Spleen (tissue), 13 donors: ENCODE measurements at regions of chr1 and their contacts with region 1.

Region 1: GRCh38 chr1:30911046-30911954 is 2.7 kb upstream of the SDC3 start:
- DNase-seq: peak; percentile 87
- H3K4me3 ChIP-seq: no peak overlapping the region
- H3K27ac ChIP-seq: peak overlapping the region in 3 of 8 donors; percentile 73 to 81 (median 77)
- H3K4me1 ChIP-seq: peaks cover 10 to 70% (median 48%) of the 10 kb centered on the region in 6 donors
- H3K27me3 ChIP-seq: peaks cover 0 to 39% (median 14%) of the 10 kb centered on the region in 7 donors
- CTCF ChIP-seq: peak; percentile 56 to 91 (median 76)
- POLR2A ChIP-seq: no peak

Region 2: GRCh38 chr1:30779294-30780071 is 131.8 kb before region 1 on chr1:
- intact Hi-C with region 1: loop called (anchors 5 kb)
- DNase-seq: peak; percentile 97
- H3K4me3 ChIP-seq: peak overlapping the region in 1 of 8 donors; percentile 28
- H3K27ac ChIP-seq: peak overlapping the region in 3 of 8 donors; percentile 55 to 78 (median 69)
- H3K4me1 ChIP-seq: peaks cover 20 to 72% (median 40%) of the 10 kb centered on the region in 6 donors
- H3K27me3 ChIP-seq: no peaks in the 10 kb centered on the region
- CTCF ChIP-seq: peak; percentile 83 to 99 (median 97)
- POLR2A ChIP-seq: no peak

Region 3: DNA sequence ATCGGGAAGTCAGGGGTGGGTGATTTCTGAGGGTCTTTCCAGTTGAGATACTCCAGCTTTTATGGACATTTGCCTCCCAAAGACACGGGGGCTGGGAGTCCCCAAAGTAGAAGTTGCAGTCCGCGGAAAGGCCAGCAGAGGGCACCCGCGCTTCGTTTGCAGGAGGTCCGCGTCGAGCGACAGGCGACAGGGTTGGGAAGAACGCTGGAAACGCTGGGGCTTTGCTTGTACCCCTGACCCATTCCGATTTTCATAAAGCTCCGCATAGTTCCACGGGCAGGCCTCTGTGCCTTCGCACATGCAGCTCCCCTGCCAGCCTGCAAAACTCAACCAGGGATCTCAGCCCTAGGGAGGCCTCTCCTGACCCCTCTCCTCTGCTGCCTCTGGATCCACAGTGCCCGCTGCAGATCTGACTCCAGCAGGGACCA is 109.5 kb before region 1 on chr1:
- intact Hi-C with region 1: loop called (anchors 5 kb)
- DNase-seq: peak; percentile 93
- H3K4me3 ChIP-seq: peak overlapping the region in 1 of 8 donors; percentile 33
- H3K27ac ChIP-seq: no peak overlapping the region
- H3K4me1 ChIP-seq: peaks cover 8 to 62% (median 46%) of the 10 kb centered on the region in 6 donors
- H3K27me3 ChIP-seq: peaks cover 0 to 33% (median 0%) of the 10 kb centered on the region in 7 donors
- CTCF ChIP-seq: peak; percentile 82 to 95 (median 92)
- POLR2A ChIP-seq: no peak